ENCODE measurements at regions of chr21 and their contacts with region 1.

Region 1: DNA sequence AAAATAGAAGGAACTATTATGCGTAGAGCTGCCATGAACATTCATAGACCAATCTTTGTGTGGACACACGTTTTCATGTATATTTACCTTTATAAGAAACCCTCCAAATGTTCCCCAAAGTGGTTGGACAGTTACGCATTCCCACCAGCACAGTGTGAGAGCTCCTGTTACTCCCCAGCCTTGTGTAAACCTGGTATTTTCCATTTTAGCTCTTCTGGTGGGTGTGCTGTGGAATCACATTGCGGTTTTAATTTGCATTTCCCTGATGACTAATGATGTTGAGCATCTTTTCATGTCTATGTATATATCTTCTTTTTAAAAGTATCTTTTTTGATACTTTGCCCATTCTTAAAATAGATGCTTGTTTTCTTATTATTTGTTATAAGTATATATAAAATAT is 3.2 kb upstream of the UBASH3A start:
- DNase-seq: no peak
- ATAC-seq: no peak
- H3K4me3 Mint-ChIP-seq: no peak overlapping the region
- H3K27ac Mint-ChIP-seq: peak overlapping the region in 5 of 10 donors; percentile 27 to 88 (median 39)
- H3K4me1 Mint-ChIP-seq: peaks cover 30 to 58% (median 51%) of the 10 kb centered on the region in 4 donors
- H3K27me3 Mint-ChIP-seq: no peaks in the 10 kb centered on the region

Region 2: GRCh38 chr21:42337830-42338728 is 62.4 kb before region 1 on chr21:
- POLR2A ChIA-PET with region 1: interaction called, 16 read pairs
- DNase-seq: peak; percentile 73 to 92 (median 80)
- ATAC-seq: peak; percentile 100
- H3K4me3 Mint-ChIP-seq: peak overlapping the region; percentile 4 to 74 (median 42)
- H3K27ac Mint-ChIP-seq: peak overlapping the region; percentile 22 to 93 (median 74)
- H3K4me1 Mint-ChIP-seq: peaks cover 6 to 12% (median 9%) of the 10 kb centered on the region in 4 donors
- H3K27me3 Mint-ChIP-seq: peaks cover 0 to 8% (median 0%) of the 10 kb centered on the region in 5 donors

Region 3: DNA sequence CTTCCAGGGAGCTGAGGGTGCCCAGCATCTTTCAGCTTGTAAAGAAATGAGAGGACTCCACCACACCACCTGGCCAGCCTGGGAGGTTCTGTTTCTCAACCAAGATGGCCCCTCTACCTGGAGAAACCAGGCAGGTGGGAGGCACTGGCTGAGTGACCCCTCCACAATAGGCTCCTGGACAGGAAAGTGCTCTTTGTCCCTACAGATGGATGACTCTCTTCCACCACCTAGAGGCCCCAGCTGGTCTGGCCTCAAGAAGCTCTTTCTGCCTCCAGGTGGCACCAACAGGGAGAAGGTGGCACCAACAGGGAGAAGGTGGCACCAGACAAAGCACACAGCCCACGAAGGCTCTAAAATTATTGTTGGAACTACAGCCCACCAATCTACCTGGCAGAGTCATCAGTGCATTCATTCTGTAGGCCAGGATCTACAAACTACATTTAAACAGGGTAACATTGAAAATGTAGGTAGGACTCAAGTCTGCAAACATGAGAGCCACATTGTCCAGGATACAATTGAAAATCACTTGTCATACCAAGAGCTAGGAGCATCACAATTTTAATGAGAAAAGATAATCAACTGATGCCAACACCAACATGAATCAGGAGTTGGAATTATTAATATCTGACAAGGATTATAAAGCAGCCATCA is 19.1 kb before region 1 on chr21:
- POLR2A ChIA-PET with region 1: interaction called, 14 read pairs
- DNase-seq: peak in 5 of 10 donors; percentile 29 to 80 (median 36)
- ATAC-seq: peak; percentile 61 to 87
- H3K4me3 Mint-ChIP-seq: no peak overlapping the region
- H3K27ac Mint-ChIP-seq: no peak overlapping the region
- H3K4me1 Mint-ChIP-seq: peaks cover 17 to 38% (median 26%) of the 10 kb centered on the region in 4 donors
- H3K27me3 Mint-ChIP-seq: no peaks in the 10 kb centered on the region

Region 4: DNA sequence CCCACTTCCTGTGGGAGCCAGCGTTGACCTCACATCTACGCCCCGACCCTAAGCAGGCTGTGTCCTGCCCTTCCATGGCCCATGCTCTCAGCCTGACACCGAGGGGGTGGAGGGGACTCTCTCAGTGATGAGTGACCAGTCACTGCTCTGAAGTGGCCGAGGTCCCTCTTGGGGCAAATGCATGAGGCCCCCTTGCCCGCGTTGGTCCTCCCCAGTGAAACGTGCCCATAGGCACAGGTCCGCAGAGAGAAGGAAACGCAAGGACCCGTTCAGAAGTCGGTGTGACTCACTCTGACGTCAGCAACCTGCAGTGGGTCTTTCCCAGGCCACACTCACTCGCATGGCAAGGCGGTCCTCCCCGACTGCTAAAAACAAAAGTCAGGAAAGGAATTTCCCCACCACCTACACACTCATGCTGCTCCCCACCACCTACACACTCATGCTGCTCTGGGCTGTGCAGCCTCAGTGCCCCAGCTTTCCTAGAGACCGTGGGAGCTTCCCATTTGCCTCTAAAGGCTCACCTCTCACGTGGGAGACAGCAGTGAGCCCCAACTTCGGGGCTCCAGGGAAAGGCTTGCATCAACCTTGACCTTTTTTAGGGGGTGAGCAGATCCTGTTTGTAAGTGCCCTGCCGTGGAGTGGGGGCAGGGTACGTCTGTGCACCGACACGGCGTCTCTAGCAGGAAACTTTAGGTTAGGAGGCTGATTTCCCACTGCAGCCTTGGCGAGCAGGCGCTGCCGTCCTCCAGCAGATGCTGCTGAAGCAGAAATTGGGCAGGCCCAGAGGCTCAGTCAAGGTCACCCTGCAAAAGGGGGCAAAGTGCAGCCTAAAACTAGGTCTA is 14.6 kb after region 1 on chr21:
- POLR2A ChIA-PET with region 1: interaction called, 273 read pairs
- DNase-seq: peak; percentile 64 to 93 (median 85)
- ATAC-seq: peak; percentile 91 to 95
- H3K4me3 Mint-ChIP-seq: peak overlapping the region; percentile 59 to 84 (median 78)
- H3K27ac Mint-ChIP-seq: peak overlapping the region; percentile 94 to 100 (median 99)
- H3K4me1 Mint-ChIP-seq: peaks cover 23 to 66% (median 55%) of the 10 kb centered on the region in 4 donors
- H3K27me3 Mint-ChIP-seq: no peaks in the 10 kb centered on the region

Region 5: GRCh38 chr21:42437786-42438645 is 37.5 kb after region 1 on chr21:
- POLR2A ChIA-PET with region 1: interaction called, 10 read pairs
- DNase-seq: peak in 1 of 10 donors; percentile 37
- ATAC-seq: no peak
- H3K4me3 Mint-ChIP-seq: peak overlapping the region in 1 of 10 donors; percentile 12
- H3K27ac Mint-ChIP-seq: peak overlapping the region in 8 of 10 donors; percentile 43 to 90 (median 74)
- H3K4me1 Mint-ChIP-seq: peaks cover 41 to 70% (median 56%) of the 10 kb centered on the region in 4 donors
- H3K27me3 Mint-ChIP-seq: peaks cover 0 to 2% (median 0%) of the 10 kb centered on the region in 5 donors

Region 6: DNA sequence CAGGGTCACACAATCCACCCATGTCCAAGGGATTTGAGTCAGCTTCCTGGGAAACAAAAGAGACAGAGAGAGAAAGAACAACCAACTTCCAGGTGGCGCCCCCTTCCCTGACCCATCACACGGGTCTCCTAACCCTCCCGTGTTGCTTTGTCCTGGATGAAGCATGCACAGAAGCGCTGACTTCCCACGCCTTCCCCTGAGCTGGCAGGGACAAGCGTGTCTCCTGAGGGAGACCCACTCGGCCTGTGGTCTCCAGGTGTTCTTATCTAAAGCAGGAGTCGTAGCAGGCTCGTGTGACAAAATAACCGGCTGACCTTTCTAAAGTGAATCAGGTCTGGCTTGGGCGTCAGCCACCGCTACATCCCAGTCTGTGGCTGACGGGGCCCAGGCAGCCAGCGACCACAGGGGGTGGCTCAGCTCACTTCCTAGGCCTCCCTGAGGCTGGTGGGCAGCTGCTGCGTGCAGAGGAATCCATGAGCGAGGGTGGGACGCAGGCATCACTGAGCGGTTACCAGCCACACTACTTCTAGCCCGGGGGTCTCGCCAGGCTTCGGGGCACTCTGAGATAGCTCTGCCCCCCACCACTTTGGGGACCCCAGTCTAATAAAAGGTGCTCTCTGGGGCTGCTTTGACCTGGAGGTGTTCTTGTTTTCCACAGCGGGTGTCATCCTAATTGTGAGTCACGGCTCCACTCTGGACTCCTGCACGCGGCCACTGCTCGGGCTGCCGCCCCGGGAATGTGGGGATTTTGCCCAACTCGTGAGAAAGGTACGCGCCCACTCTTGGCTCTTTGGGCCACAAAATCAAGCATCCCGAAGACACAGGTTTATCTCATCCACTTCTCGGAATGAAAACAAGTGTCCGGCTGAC is 43.6 kb after region 1 on chr21:
- POLR2A ChIA-PET with region 1: interaction called, 21 read pairs
- DNase-seq: peak in 1 of 10 donors; percentile 50
- ATAC-seq: no peak
- H3K4me3 Mint-ChIP-seq: no peak overlapping the region
- H3K27ac Mint-ChIP-seq: peak overlapping the region in 7 of 10 donors; percentile 6 to 91 (median 73)
- H3K4me1 Mint-ChIP-seq: peaks cover 21 to 54% (median 34%) of the 10 kb centered on the region in 4 donors
- H3K27me3 Mint-ChIP-seq: peaks cover 0 to 2% (median 0%) of the 10 kb centered on the region in 5 donors

Region 7: GRCh38 chr21:42449296-42449927 is 48.9 kb after region 1 on chr21:
- POLR2A ChIA-PET with region 1: interaction called, 21 read pairs
- DNase-seq: no peak
- ATAC-seq: peak in 1 of 2 donors; percentile 5
- H3K4me3 Mint-ChIP-seq: peak overlapping the region in 1 of 10 donors; percentile 70
- H3K27ac Mint-ChIP-seq: peak overlapping the region; percentile 91 to 99 (median 98)
- H3K4me1 Mint-ChIP-seq: peaks cover 15 to 51% (median 40%) of the 10 kb centered on the region in 4 donors
- H3K27me3 Mint-ChIP-seq: peaks cover 0 to 2% (median 0%) of the 10 kb centered on the region in 5 donors

Measured in naive thymus-derived CD8-positive, alpha-beta T cell (primary cell).